HAP-1 (cell line): ENCODE measurements at regions of chr1 and their contacts with region 1.

Region 1: DNA sequence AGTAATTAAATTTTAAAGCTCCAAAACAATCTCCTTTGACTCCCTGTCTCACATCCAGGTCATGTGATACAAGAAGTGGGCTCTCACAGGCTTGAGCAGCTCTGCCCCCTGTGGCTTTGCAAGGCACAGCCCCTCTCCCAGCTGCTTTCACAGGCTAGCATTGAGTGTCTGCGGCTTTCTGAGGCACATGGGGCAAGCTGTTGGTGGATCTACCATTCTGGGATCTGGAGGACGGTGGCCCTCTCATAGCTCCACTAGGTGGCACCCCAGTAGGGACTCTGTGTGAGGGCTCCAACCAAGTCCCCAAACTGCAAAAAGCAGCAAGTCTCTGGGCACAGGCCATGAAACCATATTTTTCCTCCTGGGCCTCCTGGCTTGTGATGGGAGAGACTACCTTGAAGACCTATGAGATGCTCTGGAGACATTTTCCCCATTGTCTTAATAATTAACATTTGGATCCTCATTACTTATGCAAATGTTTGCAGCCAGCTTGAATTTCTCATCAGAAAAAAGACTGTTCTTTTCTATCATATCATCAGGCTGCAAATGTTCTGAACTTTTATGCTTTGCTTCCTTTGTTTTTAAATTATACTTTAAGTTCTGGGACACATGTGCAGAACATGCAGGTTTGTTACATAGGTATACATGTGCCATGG is 554.1 kb upstream of the OLFM3 start:
- DNase-seq: peak; percentile 28 to 68
- H3K4me3 ChIP-seq: no peak overlapping the region
- H3K4me1 ChIP-seq: no peaks in the 10 kb centered on the region
- H3K27me3 ChIP-seq: no peaks in the 10 kb centered on the region

Region 2: GRCh38 chr1:102615896-102616295 is 65.0 kb after region 1 on chr1:
- in situ Hi-C with region 1: no loop called
- DNase-seq: no peak
- H3K4me3 ChIP-seq: no peak overlapping the region
- H3K4me1 ChIP-seq: no peaks in the 10 kb centered on the region
- H3K27me3 ChIP-seq: no peaks in the 10 kb centered on the region

Region 3: DNA sequence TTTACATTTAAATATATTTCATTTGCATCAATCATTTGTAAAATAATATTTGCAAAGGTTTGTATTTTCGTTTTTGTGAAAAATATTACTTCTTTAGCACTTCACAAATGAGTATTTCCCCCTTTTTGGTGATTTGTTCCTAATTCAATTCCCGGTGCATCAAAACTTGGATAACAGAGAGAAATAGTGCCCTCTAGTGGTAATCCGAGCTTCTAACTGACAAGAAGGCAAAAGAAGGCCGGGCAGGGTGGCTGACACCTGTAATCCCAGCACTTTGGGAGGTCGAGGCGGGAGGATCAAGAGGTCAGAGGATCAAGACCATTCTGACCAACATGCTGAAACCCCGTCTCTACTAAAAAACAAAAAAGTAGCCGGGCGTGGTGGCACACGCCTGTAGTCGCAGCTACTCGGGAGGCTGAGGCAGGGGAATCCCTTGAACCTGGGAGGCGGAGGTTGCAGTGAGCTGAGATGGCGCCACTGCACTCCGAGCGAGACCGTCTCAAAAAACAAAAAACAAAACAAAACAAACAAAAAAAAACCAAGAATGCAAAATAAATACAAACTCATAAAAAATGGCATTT is 419.7 kb after region 1 on chr1:
- in situ Hi-C with region 1: loop called (anchors 25 kb)
- DNase-seq: peak; percentile 52 to 55
- H3K4me3 ChIP-seq: no peak overlapping the region
- H3K4me1 ChIP-seq: peaks cover 9% of the 10 kb centered on the region
- H3K27me3 ChIP-seq: no peaks in the 10 kb centered on the region